Posterior vena cava (tissue), 2 donors: ENCODE measurements at regions of chr6 and their contacts with region 1.

Region 1: DNA sequence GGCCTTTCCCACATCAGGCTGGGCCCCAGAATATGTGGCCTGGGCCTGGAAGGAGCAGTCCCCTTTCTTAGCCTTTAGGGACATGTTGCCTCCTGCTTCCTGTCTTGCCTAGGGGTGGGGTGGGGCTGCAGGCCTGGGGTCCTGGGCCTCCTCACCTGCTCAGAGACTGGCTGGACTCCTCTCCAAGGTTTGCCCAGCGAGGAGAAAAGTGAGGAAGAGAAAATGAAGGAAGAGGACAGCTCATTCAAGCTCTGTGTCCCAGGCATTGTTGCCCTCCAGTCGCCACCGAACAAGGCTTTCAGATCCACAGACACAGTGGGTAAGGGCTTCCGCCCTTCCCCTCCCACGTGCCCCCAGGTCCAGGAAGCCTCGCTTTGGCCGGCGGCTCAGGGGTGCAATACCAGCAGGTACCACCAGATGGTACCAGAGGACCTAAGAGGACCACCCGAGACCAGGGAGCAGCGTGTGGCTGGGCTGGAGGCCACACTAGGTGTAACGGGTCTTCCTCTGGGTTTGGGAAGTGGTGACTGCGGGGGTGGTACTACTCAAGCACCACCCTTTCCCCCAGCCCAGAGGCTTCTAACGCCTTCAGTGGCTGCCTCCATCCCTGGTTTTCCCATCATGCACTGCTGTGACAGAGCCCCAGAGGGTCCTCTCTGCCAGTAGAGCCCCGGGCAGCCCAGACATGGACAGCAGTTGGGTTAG is 5.5 kb upstream of the BAK1 start:
- DNase-seq: peak; percentile 91

Region 2: GRCh38 chr6:32868257-32868788 is 717.2 kb before region 1 on chr6:
- intact Hi-C with region 1: no loop called
- DNase-seq: peak; percentile 91

Region 3: DNA sequence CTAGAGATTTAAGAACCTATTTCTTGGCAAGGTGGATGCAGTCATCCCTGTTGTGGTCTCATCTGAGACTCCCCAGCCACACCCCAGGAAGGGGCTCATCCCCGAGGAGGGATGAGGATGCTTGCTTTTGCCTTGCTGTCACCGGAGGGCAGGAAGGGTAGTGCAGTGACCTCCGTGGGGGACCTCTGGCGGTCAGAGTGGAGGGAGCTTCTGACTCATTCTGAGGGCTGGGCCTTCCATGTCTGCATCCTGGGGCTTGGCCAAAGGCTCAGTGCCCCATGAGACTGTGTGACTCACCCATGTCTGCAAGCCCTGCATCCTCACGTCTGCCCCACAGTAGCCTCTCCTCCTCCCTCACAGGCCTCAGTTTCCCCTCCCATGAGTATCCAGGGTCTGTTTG is 87.3 kb after region 1 on chr6:
- intact Hi-C with region 1: loop called (anchors 5 to 10 kb)
- DNase-seq: peak; percentile 97

Region 4: GRCh38 chr6:33709605-33710295 is 124.2 kb after region 1 on chr6:
- intact Hi-C with region 1: loop called in 1 of 2 experiments (anchors 5 kb)
- DNase-seq: no peak